ENCODE measurements at regions of chr6 and their contacts with region 1.

Region 1: DNA sequence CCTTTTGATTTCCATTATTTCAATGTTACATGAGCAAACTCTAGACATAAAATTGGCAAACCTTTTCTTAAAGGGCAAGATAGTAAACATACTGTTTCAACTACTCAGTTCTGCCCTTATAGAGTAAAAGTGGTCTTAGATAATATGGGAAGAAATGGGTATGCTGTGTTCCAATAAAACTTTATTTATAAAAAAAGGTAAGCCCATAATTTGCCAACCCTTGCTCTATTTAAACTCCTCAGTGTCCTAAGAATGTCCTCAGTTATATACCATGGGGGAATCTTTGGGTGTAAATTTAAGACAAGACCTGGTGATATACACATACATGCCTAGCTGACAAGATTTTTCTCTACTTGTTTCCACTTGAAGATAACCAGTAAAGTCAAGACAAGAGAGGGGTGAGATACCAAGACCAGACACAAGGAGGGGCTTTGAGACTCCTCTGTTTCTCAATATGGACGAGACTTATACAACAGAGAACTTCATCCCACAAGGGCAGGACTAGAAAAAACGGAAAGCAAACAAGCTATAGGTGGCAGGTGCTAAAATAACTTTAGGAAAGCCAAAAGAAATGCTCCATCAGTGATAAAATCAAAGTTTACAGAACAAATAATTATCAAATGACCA is 10.5 kb downstream of the SNX3 start:
- DNase-seq: no peak
- ATAC-seq: peak; percentile 91
- H3K4me3 ChIP-seq: no peak overlapping the region
- H3K27ac ChIP-seq: no peak overlapping the region
- H3K4me1 ChIP-seq: no peaks in the 10 kb centered on the region
- H3K27me3 ChIP-seq: no peaks in the 10 kb centered on the region
- CTCF ChIP-seq: peak; percentile 34 to 56 (median 54); a peak in 5 of 6 replicates
- EP300 ChIP-seq: no peak
- POLR2A ChIP-seq: no peak
- RAD21 ChIP-seq: peak; percentile 48

Region 2: GRCh38 chr6:108363889-108364313 is 113.5 kb after region 1 on chr6:
- CTCF ChIA-PET with region 1: interaction called, 9 read pairs
- POLR2A ChIA-PET with region 1: interaction called, 3 read pairs
- RAD21 ChIA-PET with region 1: interaction called, 10 read pairs
- SMC1A ChIA-PET with region 1: interaction called, 6 read pairs
- in situ Hi-C with region 1: no loop called
- intact Hi-C with region 1: no loop called
- DNase-seq: no peak
- ATAC-seq: no peak
- H3K4me3 ChIP-seq: no peak overlapping the region
- H3K27ac ChIP-seq: no peak overlapping the region
- H3K4me1 ChIP-seq: no peaks in the 10 kb centered on the region
- H3K27me3 ChIP-seq: no peaks in the 10 kb centered on the region
- CTCF ChIP-seq: no peak
- EP300 ChIP-seq: no peak
- POLR2A ChIP-seq: no peak
- RAD21 ChIP-seq: no peak

Region 3: DNA sequence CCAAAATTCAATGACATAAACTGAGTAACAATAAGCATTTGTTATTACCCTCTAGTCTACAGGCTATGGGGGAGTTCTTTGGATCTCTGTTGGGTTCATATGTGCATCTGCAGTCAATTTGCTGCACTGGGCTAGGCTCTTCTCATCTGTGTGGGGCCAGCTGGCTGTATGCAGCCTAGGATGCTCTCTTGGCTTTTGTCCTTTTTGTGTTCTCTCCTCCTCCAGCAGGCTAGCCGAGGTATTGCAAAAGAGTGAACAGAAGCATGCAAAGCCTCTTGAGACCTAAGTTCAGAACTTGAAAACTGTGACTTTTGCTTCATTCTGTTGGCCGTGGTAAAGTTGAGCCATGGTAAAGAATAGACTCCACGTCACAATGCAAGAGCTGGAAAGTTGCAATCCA is 247.5 kb after region 1 on chr6:
- CTCF ChIA-PET with region 1: interaction called, 76 read pairs
- POLR2A ChIA-PET with region 1: no interaction called
- RAD21 ChIA-PET with region 1: interaction called, 28 read pairs
- SMC1A ChIA-PET with region 1: interaction called, 28 read pairs
- in situ Hi-C with region 1: loop called (anchors 5 kb)
- intact Hi-C with region 1: loop called (anchors 5 kb)
- DNase-seq: no peak
- ATAC-seq: peak; percentile 85
- H3K4me3 ChIP-seq: no peak overlapping the region
- H3K27ac ChIP-seq: no peak overlapping the region
- H3K4me1 ChIP-seq: no peaks in the 10 kb centered on the region
- H3K27me3 ChIP-seq: no peaks in the 10 kb centered on the region
- CTCF ChIP-seq: peak; percentile 44 to 61 (median 59); a peak in 5 of 6 replicates
- EP300 ChIP-seq: no peak
- POLR2A ChIP-seq: no peak
- RAD21 ChIP-seq: peak; percentile 61

Measured in GM12878 (cell line).